Activated naive CD4-positive, alpha-beta T cell treated with anti-CD3 and anti-CD28 coated beads for 36 hours (primary cell): ENCODE measurements at regions of chr12 and their contacts with region 1.

Region 1: DNA sequence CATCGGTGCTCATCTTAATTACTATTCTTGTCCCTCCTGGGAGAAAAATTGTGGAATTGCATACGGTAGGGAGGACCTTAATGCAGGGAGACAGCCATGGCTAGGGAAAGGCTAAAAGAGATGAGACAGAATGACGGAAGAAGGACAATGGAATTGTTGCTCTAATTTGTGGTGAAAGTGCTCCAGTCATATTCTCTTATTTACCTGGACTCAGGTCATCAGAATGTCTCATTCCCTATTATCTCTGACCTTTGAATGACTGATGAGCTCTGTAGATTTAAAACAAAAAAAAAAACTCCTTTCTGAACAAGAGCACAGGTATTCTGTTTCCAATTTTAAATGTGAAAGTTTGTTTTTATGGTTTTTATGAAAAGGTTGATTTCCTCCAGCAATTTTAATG is 8.6 kb upstream of the EPS8 start:
- DNase-seq: no peak
- H3K4me3 Mint-ChIP-seq: no peak overlapping the region
- H3K27ac Mint-ChIP-seq: no peak overlapping the region
- H3K4me1 Mint-ChIP-seq: no peaks in the 10 kb centered on the region
- H3K27me3 Mint-ChIP-seq: peaks cover 5% of the 10 kb centered on the region

Region 2: DNA sequence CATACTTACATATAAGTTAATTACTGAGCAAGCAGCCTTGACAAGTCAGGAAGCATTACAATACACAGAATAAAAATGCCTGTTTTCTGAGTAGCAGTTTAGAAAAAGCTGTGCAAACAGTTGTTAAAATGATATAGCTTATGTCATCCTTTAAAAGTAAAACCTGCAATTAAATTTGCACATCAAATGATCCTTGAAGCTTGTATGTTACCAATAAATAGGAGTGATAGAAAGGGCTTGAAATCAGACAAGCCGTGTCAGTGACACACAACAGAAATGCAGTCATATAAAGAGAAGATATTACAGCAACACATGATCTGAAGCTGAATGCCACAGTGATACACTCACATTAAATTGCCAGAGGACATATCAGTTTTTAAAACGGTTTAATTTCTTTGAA is 78.6 kb before region 1 on chr12:
- CTCF ChIA-PET with region 1: no interaction called
- intact Hi-C with region 1: no loop called
- DNase-seq: no peak
- H3K4me3 Mint-ChIP-seq: no peak overlapping the region
- H3K27ac Mint-ChIP-seq: no peak overlapping the region
- H3K4me1 Mint-ChIP-seq: peaks cover 5% of the 10 kb centered on the region
- H3K27me3 Mint-ChIP-seq: peaks cover 5% of the 10 kb centered on the region

Region 3: DNA sequence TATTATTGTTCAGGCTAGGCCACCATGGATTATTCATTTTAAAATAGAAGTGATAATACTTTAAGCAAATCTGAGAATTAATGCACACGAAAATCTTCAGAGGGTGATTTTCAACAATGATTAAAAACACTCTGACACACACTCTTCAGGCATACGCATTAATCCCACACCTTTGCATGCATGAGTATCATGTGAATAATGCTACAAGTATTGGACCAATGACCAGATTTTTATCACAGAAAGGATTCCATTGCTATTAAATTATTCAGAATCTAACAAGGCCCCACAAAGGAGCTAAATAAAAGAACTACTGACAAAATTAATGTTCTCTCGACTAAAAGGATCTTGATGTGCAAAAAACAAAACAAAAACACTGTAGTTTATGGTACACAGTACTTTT is 19.7 kb before region 1 on chr12:
- CTCF ChIA-PET with region 1: interaction called, 5 read pairs
- intact Hi-C with region 1: loop called (anchors 2 kb)
- DNase-seq: no peak
- H3K4me3 Mint-ChIP-seq: no peak overlapping the region
- H3K27ac Mint-ChIP-seq: no peak overlapping the region
- H3K4me1 Mint-ChIP-seq: no peaks in the 10 kb centered on the region
- H3K27me3 Mint-ChIP-seq: peaks cover 24% of the 10 kb centered on the region

Region 4: GRCh38 chr12:15823360-15824128 is 25.7 kb after region 1 on chr12:
- CTCF ChIA-PET with region 1: no interaction called
- intact Hi-C with region 1: no loop called
- DNase-seq: no peak
- H3K4me3 Mint-ChIP-seq: no peak overlapping the region
- H3K27ac Mint-ChIP-seq: no peak overlapping the region
- H3K4me1 Mint-ChIP-seq: no peaks in the 10 kb centered on the region
- H3K27me3 Mint-ChIP-seq: peaks cover 2% of the 10 kb centered on the region